ENCODE measurements at regions of chr1 and their contacts with region 1.

Region 1: DNA sequence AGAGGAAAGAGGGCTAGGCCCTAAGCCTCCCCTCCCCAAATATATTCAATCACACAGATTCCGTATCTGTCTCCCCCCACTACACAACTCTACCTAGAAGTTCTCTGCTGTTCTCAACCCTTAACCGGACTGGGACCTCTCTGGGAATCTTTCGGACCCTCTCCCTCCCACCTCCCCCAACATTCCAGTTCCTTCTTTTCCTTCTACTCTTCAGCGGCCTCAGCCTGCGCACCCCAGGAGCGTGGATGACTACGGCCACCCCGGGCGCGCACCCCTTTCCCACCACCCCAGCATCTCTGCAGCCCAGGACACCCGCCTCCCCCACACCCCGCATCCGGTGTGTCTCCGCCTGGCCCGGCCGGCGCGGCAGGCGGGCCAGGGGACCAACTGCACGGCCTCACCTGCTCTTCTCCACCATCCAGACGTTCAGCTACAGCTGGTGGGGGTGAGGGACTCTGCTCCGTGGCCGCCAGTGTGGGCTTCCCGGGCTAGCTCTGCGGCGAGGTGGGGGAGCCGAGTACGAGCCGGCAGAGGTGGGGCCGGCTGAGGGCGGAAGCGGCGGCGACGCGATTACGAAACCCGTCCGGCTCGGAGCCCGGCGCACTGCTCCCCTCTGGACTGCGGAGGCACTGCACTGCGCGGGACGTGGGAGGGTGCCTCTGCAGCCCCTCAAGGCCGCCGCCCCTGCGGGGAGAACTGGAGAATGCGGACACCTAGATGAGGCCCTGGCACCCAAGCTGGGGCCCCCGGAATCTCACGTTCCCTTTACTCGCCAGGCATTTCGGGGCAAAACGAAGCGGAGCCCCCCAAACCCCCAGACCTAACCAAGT is at the start of gene CDC42SE1:
- DNase-seq: peak; percentile 78 to 90 (median 84)
- H3K4me3 ChIP-seq: peak within 1 kb of the TSS; percentile 92
- H3K4me3 Mint-ChIP-seq: peak within 1 kb of the TSS; percentile 95 to 100 (median 99)
- H3K27ac ChIP-seq: peak within 1 kb of the TSS; percentile 98
- H3K27ac Mint-ChIP-seq: peak within 1 kb of the TSS; percentile 94 to 99 (median 98)
- H3K4me1 ChIP-seq: peaks cover 17% of the 10 kb centered on the region
- H3K4me1 Mint-ChIP-seq: peaks cover 49 to 59% (median 59%) of the 10 kb centered on the region in 3 donors
- H3K27me3 ChIP-seq: no peaks in the 10 kb centered on the region
- H3K27me3 Mint-ChIP-seq: no peaks in the 10 kb centered on the region
- total RNA-seq, gene CDC42SE1: 201 to 213 TPM

Region 2: GRCh38 chr1:151006327-151007052 is 52.8 kb before region 1 on chr1 and contains the start of gene MINDY1:
- CTCF ChIA-PET with region 1: interaction called, 15 read pairs
- POLR2A ChIA-PET with region 1: interaction called, 4 read pairs
- DNase-seq: peak in 3 of 5 donors; percentile 3 to 53 (median 43)
- H3K4me3 ChIP-seq: peak within 1 kb of the TSS; percentile 77
- H3K4me3 Mint-ChIP-seq: peak within 1 kb of the TSS; percentile 82 to 98 (median 93)
- H3K27ac ChIP-seq: peak within 1 kb of the TSS; percentile 89
- H3K27ac Mint-ChIP-seq: peak within 1 kb of the TSS; percentile 91 to 100 (median 99)
- H3K4me1 ChIP-seq: peaks cover 78% of the 10 kb centered on the region
- H3K4me1 Mint-ChIP-seq: peaks cover 62 to 90% (median 85%) of the 10 kb centered on the region in 3 donors
- H3K27me3 ChIP-seq: no peaks in the 10 kb centered on the region
- H3K27me3 Mint-ChIP-seq: no peaks in the 10 kb centered on the region
- total RNA-seq, gene MINDY1: 5.7 to 6.3 TPM

Region 3: GRCh38 chr1:151047925-151048645 is 11.2 kb before region 1 on chr1:
- CTCF ChIA-PET with region 1: interaction called, 94 read pairs
- POLR2A ChIA-PET with region 1: interaction called, 88 read pairs
- DNase-seq: peak; percentile 38 to 76 (median 63)
- H3K4me3 ChIP-seq: peak overlapping the region; percentile 76
- H3K4me3 Mint-ChIP-seq: peak overlapping the region; percentile 88 to 96 (median 91)
- H3K27ac ChIP-seq: peak overlapping the region; percentile 53
- H3K27ac Mint-ChIP-seq: peak overlapping the region; percentile 87 to 98 (median 93)
- H3K4me1 ChIP-seq: peaks cover 54% of the 10 kb centered on the region
- H3K4me1 Mint-ChIP-seq: peaks cover 63 to 78% (median 74%) of the 10 kb centered on the region in 3 donors
- H3K27me3 ChIP-seq: no peaks in the 10 kb centered on the region
- H3K27me3 Mint-ChIP-seq: no peaks in the 10 kb centered on the region

Region 4: DNA sequence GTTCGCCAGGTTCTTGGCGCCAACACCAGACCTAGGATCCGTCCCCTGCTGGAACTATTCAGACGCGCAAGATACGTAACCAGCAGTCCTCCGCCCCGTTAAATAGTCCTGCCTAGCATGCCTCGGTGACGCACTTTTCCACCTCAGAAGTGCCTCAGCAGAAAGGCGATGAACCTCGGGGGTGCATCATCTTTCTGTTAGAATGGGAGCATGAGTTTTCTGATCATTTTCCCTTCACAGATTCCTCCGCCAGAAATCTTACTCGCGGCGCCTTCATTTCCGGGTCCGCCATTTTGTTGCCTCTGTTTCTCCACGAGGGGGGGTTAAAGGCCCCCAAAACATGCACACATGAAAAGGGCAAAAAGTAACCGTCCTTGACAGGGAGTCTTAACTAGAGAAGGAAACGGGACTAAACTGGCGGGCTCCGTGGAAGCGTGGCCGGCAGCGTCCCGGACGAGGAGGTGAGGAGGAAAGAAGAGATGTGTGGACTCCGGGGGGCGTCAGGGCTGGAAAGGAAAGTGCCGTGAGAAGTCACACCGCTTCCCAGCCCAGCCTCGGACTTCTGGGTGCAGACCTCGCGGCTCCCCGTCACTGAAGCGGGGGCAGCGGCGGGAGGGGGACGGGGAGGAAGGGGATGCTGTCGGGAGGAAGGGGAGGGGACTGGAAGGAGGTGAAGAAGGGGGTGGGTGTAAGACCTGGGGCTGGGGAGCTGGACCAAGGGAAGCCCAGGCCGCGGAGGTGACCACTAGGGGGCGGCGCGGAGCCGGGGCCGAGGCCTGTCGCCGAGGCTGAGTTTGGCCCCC is 11.4 kb after region 1 on chr1 and contains the start of gene GABPB2:
- CTCF ChIA-PET with region 1: interaction called, 74 read pairs
- POLR2A ChIA-PET with region 1: interaction called, 7 read pairs
- DNase-seq: peak; percentile 76 to 92 (median 86)
- H3K4me3 ChIP-seq: peak within 1 kb of the TSS; percentile 88
- H3K4me3 Mint-ChIP-seq: peak within 1 kb of the TSS; percentile 96 to 99 (median 98)
- H3K27ac ChIP-seq: peak within 1 kb of the TSS; percentile 94
- H3K27ac Mint-ChIP-seq: peak within 1 kb of the TSS; percentile 96 to 100 (median 100)
- H3K4me1 ChIP-seq: peaks cover 11% of the 10 kb centered on the region
- H3K4me1 Mint-ChIP-seq: peaks cover 25 to 31% (median 31%) of the 10 kb centered on the region in 3 donors
- H3K27me3 ChIP-seq: no peaks in the 10 kb centered on the region
- H3K27me3 Mint-ChIP-seq: no peaks in the 10 kb centered on the region
- total RNA-seq, gene GABPB2: 19.2 to 19.4 TPM

Region 5: DNA sequence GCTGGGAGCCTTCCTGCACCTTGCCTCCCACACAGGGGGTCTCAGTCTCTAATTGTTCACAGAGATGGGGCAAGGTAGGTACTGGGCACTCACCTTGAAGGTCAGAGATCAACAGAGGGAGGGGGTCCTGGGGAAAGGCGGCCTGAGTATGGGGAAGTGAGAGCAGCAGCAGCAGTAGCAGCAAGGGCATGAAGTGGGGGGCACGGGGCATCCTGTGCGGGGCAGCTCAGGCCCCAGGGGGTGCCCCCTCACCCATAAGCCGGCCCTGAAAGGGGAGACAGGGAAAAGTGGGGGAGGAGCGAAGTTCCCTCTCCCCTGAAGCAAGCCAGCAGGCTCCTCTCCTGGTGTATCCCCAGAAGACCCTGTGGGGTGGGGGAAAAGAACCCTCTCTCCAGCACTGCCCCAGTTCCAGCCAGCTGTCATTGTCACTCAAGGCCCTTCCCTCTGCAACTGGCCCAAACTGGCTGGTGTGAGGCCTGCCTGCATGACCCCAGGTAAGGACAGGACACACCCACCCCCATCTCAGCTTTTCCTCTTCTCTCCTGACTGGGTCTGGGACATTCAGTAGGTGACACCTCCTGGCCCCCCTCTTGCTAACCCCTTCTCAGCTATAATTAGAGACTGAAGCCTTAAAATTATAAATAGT is 83.2 kb after region 1 on chr1:
- CTCF ChIA-PET with region 1: no interaction called
- POLR2A ChIA-PET with region 1: no interaction called
- DNase-seq: no peak
- H3K4me3 ChIP-seq: no peak overlapping the region
- H3K4me3 Mint-ChIP-seq: no peak overlapping the region
- H3K27ac ChIP-seq: no peak overlapping the region
- H3K27ac Mint-ChIP-seq: no peak overlapping the region
- H3K4me1 ChIP-seq: peaks cover 18% of the 10 kb centered on the region
- H3K4me1 Mint-ChIP-seq: peaks cover 10 to 23% (median 16%) of the 10 kb centered on the region in 3 donors
- H3K27me3 ChIP-seq: no peaks in the 10 kb centered on the region
- H3K27me3 Mint-ChIP-seq: no peaks in the 10 kb centered on the region